Thyroid gland (tissue), 4 donors: ENCODE measurements at regions of chr20 and their contacts with region 1.

Region 1: DNA sequence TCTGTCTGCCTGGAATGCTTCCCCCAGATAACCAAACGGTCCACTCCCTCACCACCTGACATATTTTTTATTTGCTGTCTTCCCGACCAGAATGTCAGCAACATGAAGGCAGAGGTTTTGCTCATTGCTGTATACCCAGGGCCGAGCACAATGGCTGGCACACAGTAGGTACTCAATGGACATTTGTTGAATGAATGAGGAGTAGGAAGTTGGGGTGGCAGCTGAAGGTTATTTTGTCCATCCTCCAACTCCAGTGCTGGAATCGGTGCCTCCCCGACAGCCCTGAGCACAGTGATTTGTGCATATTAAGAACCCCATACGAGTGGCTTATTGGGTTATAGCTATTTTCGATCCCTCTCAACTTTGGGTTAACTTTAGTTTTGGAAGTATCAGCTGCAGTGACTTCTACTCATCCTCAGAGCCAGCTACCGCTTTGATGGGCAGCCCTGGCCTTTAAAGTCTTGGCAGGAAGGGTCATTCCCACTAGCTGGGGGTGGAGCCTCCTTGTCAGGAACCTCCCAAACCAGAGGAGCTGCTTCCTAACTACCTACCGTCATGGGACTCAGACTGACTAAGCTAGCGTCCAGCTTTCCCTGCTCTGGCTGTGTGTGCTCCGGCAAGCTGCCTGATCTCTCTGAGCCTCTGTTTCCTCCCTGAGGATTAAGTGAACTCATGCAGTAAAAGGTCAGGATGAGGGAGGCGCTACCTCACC is 10.2 kb downstream of the DUSP15 start:
- DNase-seq: peak; percentile 40 to 41
- H3K4me3 ChIP-seq: no peak overlapping the region
- H3K27ac ChIP-seq: no peak overlapping the region
- H3K4me1 ChIP-seq: peaks cover 10 to 19% of the 10 kb centered on the region in 2 donors
- H3K27me3 ChIP-seq: no peaks in the 10 kb centered on the region
- CTCF ChIP-seq: no peak
- POLR2A ChIP-seq: no peak

Region 2: DNA sequence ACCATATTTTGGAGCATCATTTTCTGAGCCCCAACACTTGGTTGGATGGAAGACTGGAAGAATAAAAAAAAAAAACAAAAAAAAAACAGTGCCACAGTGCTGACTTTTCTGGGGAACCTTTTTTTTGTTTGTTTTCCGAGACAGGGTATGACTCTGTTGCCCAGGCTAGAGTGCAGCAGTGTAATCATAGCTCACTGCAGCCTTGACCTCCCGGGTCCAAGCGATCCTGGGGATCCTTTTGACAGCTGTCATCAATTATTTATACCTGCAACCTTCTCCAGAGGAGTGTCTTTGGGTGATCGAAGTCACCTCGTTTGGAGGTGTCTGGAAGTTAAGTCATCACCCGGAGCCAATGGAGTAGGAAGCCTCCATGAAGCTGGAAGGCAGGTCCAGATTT is 128.8 kb before region 1 on chr20:
- intact Hi-C with region 1: no loop called
- DNase-seq: no peak
- H3K4me3 ChIP-seq: no peak overlapping the region
- H3K27ac ChIP-seq: no peak overlapping the region
- H3K4me1 ChIP-seq: no peaks in the 10 kb centered on the region
- H3K27me3 ChIP-seq: no peaks in the 10 kb centered on the region
- CTCF ChIP-seq: no peak
- POLR2A ChIP-seq: no peak

Region 3: DNA sequence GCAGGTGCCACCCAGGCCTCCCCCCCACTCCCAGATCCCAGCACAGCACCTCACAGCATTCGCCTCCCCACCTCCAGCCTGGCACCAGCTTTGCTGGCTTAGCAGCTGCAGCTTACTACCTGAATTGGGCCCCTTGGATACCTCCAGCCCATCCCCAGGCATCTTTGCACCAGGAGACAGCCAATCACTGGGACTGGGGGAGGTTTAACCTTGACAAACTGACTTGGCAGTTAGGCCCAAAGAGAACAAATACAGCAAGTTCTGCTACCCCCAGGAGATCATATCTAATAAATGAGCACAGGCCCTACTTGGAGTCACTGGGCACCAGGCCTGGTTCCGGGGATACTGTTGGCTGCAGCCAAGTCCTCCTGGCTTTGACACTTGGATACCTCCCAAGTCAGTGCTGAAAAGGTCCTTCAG is 82.9 kb after region 1 on chr20:
- intact Hi-C with region 1: no loop called
- DNase-seq: peak; percentile 79 to 84
- H3K4me3 ChIP-seq: no peak overlapping the region
- H3K27ac ChIP-seq: no peak overlapping the region
- H3K4me1 ChIP-seq: peaks cover 4 to 7% of the 10 kb centered on the region in 2 donors
- H3K27me3 ChIP-seq: no peaks in the 10 kb centered on the region
- CTCF ChIP-seq: no peak
- POLR2A ChIP-seq: no peak

Region 4: DNA sequence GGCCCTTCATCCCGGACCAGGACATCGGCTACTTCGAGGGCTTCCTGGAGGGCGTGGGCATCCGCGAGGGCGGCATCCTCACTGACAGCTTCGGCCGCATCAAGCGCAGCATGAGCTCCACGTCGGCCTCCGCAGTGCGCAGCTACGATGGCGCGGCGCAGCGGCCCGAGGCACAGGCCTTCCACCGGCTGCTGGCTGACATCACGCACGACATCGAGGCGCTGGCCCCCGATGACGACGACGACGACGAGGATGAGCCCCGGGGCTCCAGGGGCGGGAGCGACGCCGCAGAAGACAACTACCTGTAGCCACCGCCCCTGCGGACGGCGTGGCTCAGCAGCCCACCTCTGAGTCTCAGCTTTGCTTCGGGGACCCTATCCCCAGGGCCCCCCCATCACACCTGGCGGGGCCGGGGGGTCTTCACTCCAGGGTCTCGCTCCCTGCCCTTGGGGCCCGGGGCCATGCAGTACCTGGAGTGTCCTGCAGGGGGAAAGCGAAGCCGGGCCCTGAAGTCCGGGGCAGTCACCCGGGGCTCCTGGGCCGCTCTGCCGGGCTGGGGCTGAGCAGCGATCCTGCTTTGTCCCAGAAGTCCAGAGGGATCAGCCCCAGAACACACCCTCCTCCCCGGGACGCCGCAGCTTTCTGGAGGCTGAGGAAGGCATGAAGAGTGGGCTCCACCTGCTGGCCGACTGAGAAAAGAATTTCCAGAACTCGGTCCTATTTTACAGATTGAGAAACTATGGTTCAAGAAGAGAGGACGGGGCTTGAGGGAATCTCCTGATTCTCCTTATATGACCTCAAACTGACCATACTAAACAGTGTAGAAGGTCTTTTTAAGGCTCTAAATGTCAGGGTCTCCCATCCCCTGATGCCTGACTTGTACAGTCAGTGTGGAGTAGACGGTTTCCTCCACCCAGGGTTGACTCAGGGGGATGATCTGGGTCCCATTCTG is 171.1 kb after region 1 on chr20:
- intact Hi-C with region 1: loop called (anchors 10 kb)
- DNase-seq: peak; percentile 80 to 84
- H3K4me3 ChIP-seq: no peak overlapping the region
- H3K27ac ChIP-seq: no peak overlapping the region
- H3K4me1 ChIP-seq: peaks cover 5% of the 10 kb centered on the region in 2 donors
- H3K27me3 ChIP-seq: no peaks in the 10 kb centered on the region
- CTCF ChIP-seq: peak; percentile 78 to 87 (median 84)
- POLR2A ChIP-seq: no peak